Activated CD4-positive, alpha-beta T cell treated with anti-CD3 and anti-CD28 coated beads, Interleukin-2, amount 10 ng/mL, durations not matched to agents 24 days and 14 days (primary cell): ENCODE measurements at regions of chr7 and their contacts with region 1.

Region 1: DNA sequence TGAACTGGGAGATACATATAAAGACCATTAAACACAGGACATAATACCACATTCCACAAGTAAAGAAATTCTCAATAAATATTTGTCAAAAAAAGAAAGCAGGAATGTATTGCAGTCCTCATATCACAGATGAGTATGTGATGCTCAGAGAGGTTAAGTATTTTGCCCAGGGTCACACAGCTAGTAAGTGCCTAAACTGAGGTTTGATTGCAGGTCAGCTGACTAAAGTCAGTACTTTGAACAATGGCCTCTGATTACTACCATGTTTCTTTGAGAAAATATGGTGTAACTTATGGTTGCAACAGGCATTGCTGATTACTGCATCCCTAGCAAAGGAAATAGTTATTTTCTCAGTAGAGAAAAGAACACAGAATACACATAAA is 267.1 kb downstream of the ELMO1 start:
- DNase-seq: peak; percentile 43
- H3K4me3 Mint-ChIP-seq: no peak overlapping the region
- H3K27ac Mint-ChIP-seq: no peak overlapping the region
- H3K4me1 Mint-ChIP-seq: peaks cover 13% of the 10 kb centered on the region
- H3K27me3 Mint-ChIP-seq: no peaks in the 10 kb centered on the region

Region 2: DNA sequence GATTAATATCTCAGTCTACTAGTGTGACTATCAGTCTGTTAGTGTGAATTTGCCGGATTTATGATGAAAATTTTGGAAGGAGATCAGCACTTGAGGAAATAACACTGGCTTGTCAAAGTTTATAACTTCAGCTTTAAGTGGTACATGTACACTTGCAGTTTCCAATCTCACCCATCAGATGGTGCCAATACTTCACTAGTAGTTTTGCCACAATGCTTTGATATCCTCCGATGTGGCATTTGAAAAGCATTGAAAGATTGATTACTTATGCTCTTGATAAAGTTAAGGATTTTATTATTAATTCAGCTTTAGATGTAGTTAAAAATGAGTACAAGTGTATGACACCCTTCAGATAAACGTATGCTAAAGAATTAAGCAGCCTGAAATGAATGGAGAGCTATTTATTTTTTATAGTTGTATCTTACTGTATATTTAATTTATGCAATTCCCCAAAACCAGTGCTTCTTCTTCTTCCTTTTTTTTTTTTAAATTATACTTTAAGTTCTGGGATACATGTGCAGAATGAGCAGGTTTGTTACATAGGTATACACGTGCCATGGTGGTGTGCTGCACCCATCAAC is 693.7 kb before region 1 on chr7:
- intact Hi-C with region 1: loop called (anchors 1 kb)
- DNase-seq: peak; percentile 85
- H3K4me3 Mint-ChIP-seq: no peak overlapping the region
- H3K27ac Mint-ChIP-seq: no peak overlapping the region
- H3K4me1 Mint-ChIP-seq: peaks cover 4% of the 10 kb centered on the region
- H3K27me3 Mint-ChIP-seq: peaks cover 12% of the 10 kb centered on the region

Region 3: DNA sequence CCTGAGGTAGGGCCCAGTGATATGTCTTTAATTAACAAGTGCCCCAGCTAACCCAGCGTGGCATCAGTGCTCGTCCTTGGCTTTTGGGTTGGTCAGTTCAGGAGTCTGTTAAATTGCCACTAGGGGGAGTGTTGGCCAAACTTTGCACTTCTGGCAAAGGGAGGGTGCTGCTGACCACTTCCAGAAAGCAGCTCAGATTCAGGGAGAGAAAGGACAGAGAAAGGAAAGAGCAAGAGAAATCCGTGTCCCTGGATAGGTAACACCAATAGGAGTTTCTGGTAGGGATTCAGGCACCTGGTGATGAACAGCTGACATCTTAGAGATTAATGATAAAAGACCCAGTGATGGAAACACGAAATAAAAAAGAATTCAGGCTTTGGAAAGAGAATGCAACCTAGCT is 214.2 kb before region 1 on chr7:
- intact Hi-C with region 1: loop called (anchors 5 kb)
- DNase-seq: no peak
- H3K4me3 Mint-ChIP-seq: no peak overlapping the region
- H3K27ac Mint-ChIP-seq: no peak overlapping the region
- H3K4me1 Mint-ChIP-seq: peaks cover 35% of the 10 kb centered on the region
- H3K27me3 Mint-ChIP-seq: no peaks in the 10 kb centered on the region

Region 4: GRCh38 chr7:36986429-36987362 is 194.8 kb before region 1 on chr7:
- intact Hi-C with region 1: loop called (anchors 1 kb)
- DNase-seq: peak; percentile 85
- H3K4me3 Mint-ChIP-seq: no peak overlapping the region
- H3K27ac Mint-ChIP-seq: no peak overlapping the region
- H3K4me1 Mint-ChIP-seq: peaks cover 14% of the 10 kb centered on the region
- H3K27me3 Mint-ChIP-seq: no peaks in the 10 kb centered on the region

Region 5: GRCh38 chr7:37031571-37032257 is 149.8 kb before region 1 on chr7:
- intact Hi-C with region 1: loop called (anchors 5 kb)
- DNase-seq: peak; percentile 72
- H3K4me3 Mint-ChIP-seq: no peak overlapping the region
- H3K27ac Mint-ChIP-seq: peak overlapping the region; percentile 77
- H3K4me1 Mint-ChIP-seq: peaks cover 49% of the 10 kb centered on the region
- H3K27me3 Mint-ChIP-seq: no peaks in the 10 kb centered on the region

Region 6: GRCh38 chr7:37092548-37092947 is 89.0 kb before region 1 on chr7:
- intact Hi-C with region 1: no loop called
- DNase-seq: no peak
- H3K4me3 Mint-ChIP-seq: no peak overlapping the region
- H3K27ac Mint-ChIP-seq: peak overlapping the region; percentile 13
- H3K4me1 Mint-ChIP-seq: peaks cover 31% of the 10 kb centered on the region
- H3K27me3 Mint-ChIP-seq: no peaks in the 10 kb centered on the region

Region 7: DNA sequence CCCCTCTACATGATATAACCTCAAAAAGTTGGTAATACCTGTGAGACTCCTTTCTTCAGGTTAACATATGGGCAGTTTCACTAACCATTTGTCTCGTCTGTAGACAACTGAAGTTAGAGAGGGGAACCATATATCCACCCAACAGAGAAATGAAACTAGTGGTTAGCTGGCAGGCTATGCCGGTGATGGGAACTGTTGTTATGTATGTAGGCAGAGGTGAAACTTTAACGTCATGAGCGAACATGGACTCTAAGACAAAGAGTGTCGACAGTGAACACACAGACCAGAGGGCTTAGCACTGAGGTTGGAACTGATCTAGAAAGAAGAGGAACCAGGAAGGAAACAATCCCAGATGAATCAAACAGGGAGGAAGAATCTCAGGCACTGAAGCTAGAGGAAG is 154.7 kb after region 1 on chr7:
- intact Hi-C with region 1: no loop called
- DNase-seq: peak; percentile 77
- H3K4me3 Mint-ChIP-seq: peak overlapping the region; percentile 56
- H3K27ac Mint-ChIP-seq: peak overlapping the region; percentile 86
- H3K4me1 Mint-ChIP-seq: peaks cover 73% of the 10 kb centered on the region
- H3K27me3 Mint-ChIP-seq: no peaks in the 10 kb centered on the region